ENCODE measurements at regions of chr12 and their contacts with region 1.

Region 1: GRCh38 chr12:2834581-2835491 is at the start of gene NRIP2:
- DNase-seq: no peak
- ATAC-seq: no peak; a peak in 2 of 6 replicates
- H3K4me3 ChIP-seq: no peak within 1 kb of the TSS
- H3K27ac ChIP-seq: no peak within 1 kb of the TSS
- H3K4me1 ChIP-seq: no peaks in the 10 kb centered on the region
- CTCF ChIP-seq: no peak
- EP300 ChIP-seq: no peak
- POLR2A ChIP-seq: no peak
- RAD21 ChIP-seq: no peak
- polyA plus RNA-seq, gene NRIP2: not detected in 2 replicates

Region 2: DNA sequence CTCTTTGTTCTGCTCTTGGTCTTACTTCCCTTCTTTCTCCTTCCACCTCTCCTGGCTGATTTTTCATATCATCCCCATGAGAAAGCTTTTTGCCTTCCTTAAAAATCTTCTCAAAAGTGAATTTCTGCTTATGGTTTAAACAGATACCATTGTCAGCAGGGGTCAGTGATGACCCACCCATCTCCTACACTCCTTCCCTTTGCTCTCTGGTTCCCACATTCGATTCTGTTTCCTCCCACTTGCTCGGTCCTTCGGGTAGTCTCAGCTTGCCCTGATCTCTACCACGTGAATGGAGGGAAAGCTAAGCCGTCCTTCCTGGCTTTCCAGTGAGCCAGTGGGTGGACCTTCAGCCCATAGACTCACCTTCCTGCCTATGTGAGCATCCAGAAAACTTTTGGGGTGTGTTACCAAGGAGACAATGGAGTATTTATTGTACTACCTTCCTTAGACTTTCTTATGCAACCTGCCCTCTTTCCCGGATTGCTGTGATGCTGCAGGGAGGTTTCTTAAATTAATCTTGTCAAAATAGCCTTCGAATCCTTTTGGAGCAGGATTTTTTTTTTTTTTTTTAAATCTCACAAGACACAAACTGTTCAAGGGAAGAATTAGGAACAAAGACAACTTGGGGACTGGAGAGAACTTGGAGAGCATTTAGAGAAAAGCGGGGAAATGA is 475.7 kb before region 1 on chr12:
- CTCF ChIA-PET with region 1: no interaction called
- POLR2A ChIA-PET with region 1: no interaction called
- DNase-seq: no peak
- ATAC-seq: no peak
- H3K4me3 ChIP-seq: no peak overlapping the region
- H3K27ac ChIP-seq: no peak overlapping the region
- H3K4me1 ChIP-seq: no peaks in the 10 kb centered on the region
- CTCF ChIP-seq: no peak
- EP300 ChIP-seq: no peak
- POLR2A ChIP-seq: no peak
- RAD21 ChIP-seq: no peak

Region 3: DNA sequence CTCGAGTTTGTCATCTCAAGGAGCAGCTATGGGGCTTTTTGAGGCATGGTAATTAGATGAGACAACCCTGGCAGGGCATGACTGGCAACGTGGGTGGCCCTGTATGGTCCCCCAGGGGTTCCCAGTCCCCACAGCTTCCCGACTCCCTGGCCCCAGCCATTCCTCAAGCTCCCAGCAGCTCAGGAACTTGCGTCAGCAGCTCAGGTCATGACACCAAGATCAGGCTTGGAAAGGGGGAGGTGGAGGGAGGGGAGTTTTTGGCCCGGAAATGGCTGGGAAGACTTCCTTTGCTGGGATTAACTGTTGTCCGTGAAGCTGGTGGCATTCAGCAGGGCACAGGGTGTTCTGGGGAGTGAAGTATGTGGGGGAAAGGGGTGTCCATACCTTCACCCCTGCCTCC is 10.4 kb after region 1 on chr12:
- CTCF ChIA-PET with region 1: interaction called, 18 read pairs
- POLR2A ChIA-PET with region 1: no interaction called
- DNase-seq: no peak
- ATAC-seq: peak; percentile 18 to 20; a peak in 1 of 6 replicates
- H3K4me3 ChIP-seq: no peak overlapping the region
- H3K27ac ChIP-seq: peak overlapping the region in 1 of 2 experiments; percentile 4; a peak in 1 of 6 replicates
- H3K4me1 ChIP-seq: peaks cover 15% of the 10 kb centered on the region
- CTCF ChIP-seq: no peak
- EP300 ChIP-seq: no peak
- POLR2A ChIP-seq: no peak
- RAD21 ChIP-seq: no peak

Region 4: DNA sequence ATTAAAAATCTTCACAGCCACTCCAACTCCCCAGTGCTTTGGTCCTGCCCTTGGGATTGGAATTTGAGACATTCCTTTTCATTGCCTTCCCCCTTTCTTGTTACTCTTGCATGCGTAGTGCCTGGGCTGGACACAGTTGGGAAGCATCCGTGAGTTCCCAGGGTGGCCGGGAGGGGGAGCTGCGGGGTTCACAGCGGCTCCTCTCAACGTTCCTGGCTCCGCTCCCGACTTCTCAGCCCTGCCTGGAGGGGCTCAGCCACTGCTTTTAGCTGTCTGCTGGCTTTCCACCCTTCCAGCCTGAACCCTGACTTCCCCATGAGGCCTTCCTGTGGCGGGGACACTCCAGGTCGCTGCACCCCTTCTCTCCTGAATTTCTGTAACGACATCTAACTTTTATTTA is 18.8 kb after region 1 on chr12:
- CTCF ChIA-PET with region 1: interaction called, 12 read pairs
- POLR2A ChIA-PET with region 1: no interaction called
- DNase-seq: peak; percentile 77 to 92
- ATAC-seq: peak; percentile 70 to 86; a peak in 5 of 6 replicates
- H3K4me3 ChIP-seq: no peak overlapping the region
- H3K27ac ChIP-seq: no peak overlapping the region
- H3K4me1 ChIP-seq: peaks cover 11% of the 10 kb centered on the region
- CTCF ChIP-seq: peak; percentile 55
- EP300 ChIP-seq: no peak
- POLR2A ChIP-seq: no peak
- RAD21 ChIP-seq: peak in 1 of 2 experiments; percentile 45; a peak in 1 of 5 replicates

Region 5: DNA sequence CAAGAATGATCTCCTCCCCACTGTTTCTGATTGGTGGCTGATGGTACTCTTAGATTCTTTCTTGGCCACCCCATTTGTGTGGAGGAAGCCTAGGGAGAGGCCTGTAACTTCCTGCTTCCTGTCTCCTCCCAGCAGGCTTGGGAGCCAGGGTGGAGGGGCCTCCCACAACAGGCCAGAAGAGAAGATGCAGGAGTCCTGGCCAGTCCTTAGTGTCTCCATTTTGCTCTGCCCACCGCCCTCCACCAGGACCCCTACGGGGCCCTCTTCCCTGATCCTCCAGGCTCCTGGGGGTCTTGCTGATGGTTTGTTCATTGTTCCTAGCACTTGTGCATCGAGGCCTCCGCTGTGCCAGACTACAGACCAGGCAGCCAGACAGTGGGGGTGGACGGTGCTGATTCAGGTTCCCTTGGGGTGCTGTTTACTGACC is 249.1 kb after region 1 on chr12:
- CTCF ChIA-PET with region 1: no interaction called
- POLR2A ChIA-PET with region 1: no interaction called
- DNase-seq: no peak
- ATAC-seq: peak in 1 of 2 experiments; percentile 56; a peak in 3 of 6 replicates
- H3K4me3 ChIP-seq: no peak overlapping the region
- H3K27ac ChIP-seq: no peak overlapping the region
- H3K4me1 ChIP-seq: no peaks in the 10 kb centered on the region
- CTCF ChIP-seq: no peak
- EP300 ChIP-seq: no peak
- POLR2A ChIP-seq: no peak
- RAD21 ChIP-seq: no peak